ENCODE measurements at regions of chr12 and their contacts with region 1.

Region 1: GRCh38 chr12:49309391-49309790 is 13.7 kb upstream of the TROAP start:
- DNase-seq: no peak
- ATAC-seq: no peak
- H3K4me3 Mint-ChIP-seq: no peak overlapping the region
- H3K27ac Mint-ChIP-seq: no peak overlapping the region
- H3K4me1 Mint-ChIP-seq: no peaks in the 10 kb centered on the region
- H3K27me3 Mint-ChIP-seq: peaks cover 44% of the 10 kb centered on the region

Region 2: DNA sequence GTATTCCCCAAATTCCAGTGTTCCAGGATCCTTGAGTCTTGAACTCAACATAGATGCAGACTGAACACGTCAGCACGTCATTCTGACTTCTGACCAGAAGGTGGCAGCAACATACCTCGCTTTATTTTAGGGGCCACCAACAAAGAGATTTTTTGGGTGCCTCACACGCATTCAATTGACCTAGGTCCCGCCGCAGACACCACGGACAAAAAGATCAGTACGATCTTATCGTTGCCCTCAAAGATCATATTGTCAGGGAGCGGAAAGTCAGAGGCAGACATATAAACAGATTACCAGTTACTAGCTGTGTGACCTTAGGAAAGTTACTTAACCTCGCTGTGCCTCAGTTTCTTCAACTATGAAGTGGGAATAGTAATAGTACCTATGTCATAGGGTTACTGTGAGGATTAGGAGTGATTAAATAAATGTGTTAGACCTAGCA is 21.0 kb before region 1 on chr12:
- CTCF ChIA-PET with region 1: interaction called, 11 read pairs
- POLR2A ChIA-PET with region 1: no interaction called
- DNase-seq: peak; percentile 82
- ATAC-seq: peak; percentile 59
- H3K4me3 Mint-ChIP-seq: no peak overlapping the region
- H3K27ac Mint-ChIP-seq: no peak overlapping the region
- H3K4me1 Mint-ChIP-seq: peaks cover 5% of the 10 kb centered on the region
- H3K27me3 Mint-ChIP-seq: peaks cover 18% of the 10 kb centered on the region

Measured in activated CD8-positive, alpha-beta T cell treated with anti-CD3 and anti-CD28 coated beads, Interleukin-2, amount 10 ng/mL, durations not matched to agents 7 days and 5 days (primary cell).